Caco-2 (cell line): ENCODE measurements at regions of chr10 and their contacts with region 1.

Region 1: DNA sequence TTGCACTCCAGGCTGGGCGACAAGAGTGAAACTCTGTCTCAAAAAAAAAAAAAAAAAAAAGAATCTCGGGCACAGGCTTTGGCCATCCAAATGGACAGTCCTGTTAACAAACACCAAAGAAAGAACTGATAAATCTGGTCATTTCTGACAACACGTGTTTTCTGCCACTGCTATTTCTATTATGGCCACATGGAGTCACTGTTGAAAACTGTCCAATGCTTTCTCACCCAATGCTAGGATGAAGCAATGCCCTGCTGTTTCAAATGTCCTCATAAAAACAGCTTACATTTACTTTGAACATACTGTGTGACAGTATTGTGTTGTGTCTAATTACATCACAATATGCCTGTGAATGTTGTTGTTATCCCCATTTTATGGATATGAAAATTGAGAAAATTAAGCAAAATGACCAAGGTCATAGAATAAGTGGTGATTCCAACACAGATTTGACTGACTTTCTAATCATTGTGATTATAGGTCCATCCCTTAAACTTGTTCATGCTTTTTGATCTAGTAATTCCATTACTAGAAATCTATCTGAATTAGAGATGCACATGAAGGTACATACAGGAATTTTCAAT is 19.9 kb upstream of the MAP3K8 start:
- DNase-seq: peak in 1 of 2 experiments; percentile 77
- H3K4me3 ChIP-seq: no peak overlapping the region
- H3K4me3 Mint-ChIP-seq: no peak overlapping the region
- H3K27ac Mint-ChIP-seq: no peak overlapping the region
- H3K4me1 ChIP-seq: peaks cover 15% of the 10 kb centered on the region
- H3K4me1 Mint-ChIP-seq: peaks cover 14% of the 10 kb centered on the region
- H3K27me3 ChIP-seq: no peaks in the 10 kb centered on the region
- H3K27me3 Mint-ChIP-seq: no peaks in the 10 kb centered on the region
- CTCF ChIP-seq: peak; percentile 91 to 94

Region 2: DNA sequence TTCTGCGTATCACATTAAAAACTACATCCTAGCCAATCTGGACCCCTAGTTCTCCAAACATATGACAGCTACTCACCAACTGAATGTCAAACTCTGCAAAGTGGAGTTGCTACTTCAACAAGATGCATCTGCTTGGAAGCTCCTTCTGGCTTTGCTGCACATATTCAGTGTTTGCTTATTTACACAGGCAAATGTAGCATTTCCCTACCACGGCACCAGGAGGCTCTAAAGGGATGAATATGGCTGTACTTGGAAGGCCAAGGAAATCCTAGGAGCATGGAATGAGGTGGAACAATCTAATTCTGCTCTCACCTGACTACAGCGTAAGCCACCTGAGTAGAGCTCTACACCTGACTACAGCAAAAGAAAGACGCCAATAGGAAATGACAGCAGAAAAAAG is 104.7 kb before region 1 on chr10:
- CTCF ChIA-PET with region 1: no interaction called
- POLR2A ChIA-PET with region 1: no interaction called
- intact Hi-C with region 1: no loop called
- DNase-seq: no peak
- H3K4me3 ChIP-seq: no peak overlapping the region
- H3K4me3 Mint-ChIP-seq: no peak overlapping the region
- H3K27ac Mint-ChIP-seq: no peak overlapping the region
- H3K4me1 ChIP-seq: no peaks in the 10 kb centered on the region
- H3K4me1 Mint-ChIP-seq: no peaks in the 10 kb centered on the region
- H3K27me3 ChIP-seq: no peaks in the 10 kb centered on the region
- H3K27me3 Mint-ChIP-seq: no peaks in the 10 kb centered on the region
- CTCF ChIP-seq: no peak

Region 3: GRCh38 chr10:30433730-30434272 is 19.7 kb after region 1 on chr10 and contains the start of gene MAP3K8:
- CTCF ChIA-PET with region 1: interaction called, 38 read pairs
- POLR2A ChIA-PET with region 1: interaction called, 29 read pairs
- intact Hi-C with region 1: loop called (anchors 1 kb)
- DNase-seq: peak; percentile 95 to 96
- H3K4me3 ChIP-seq: peak within 1 kb of the TSS; percentile 91
- H3K4me3 Mint-ChIP-seq: peak within 1 kb of the TSS; percentile 92
- H3K27ac Mint-ChIP-seq: peak within 1 kb of the TSS; percentile 97
- H3K4me1 ChIP-seq: peaks cover 47% of the 10 kb centered on the region
- H3K4me1 Mint-ChIP-seq: peaks cover 56% of the 10 kb centered on the region
- H3K27me3 ChIP-seq: no peaks in the 10 kb centered on the region
- H3K27me3 Mint-ChIP-seq: no peaks in the 10 kb centered on the region
- CTCF ChIP-seq: peak in 1 of 2 experiments; percentile 1
- total RNA-seq, gene MAP3K8: 17.9 and 18.8 TPM in 2 replicates

Region 4: GRCh38 chr10:30454744-30455510 is 40.8 kb after region 1 on chr10:
- CTCF ChIA-PET with region 1: interaction called, 10 read pairs
- POLR2A ChIA-PET with region 1: no interaction called
- intact Hi-C with region 1: no loop called
- DNase-seq: no peak
- H3K4me3 ChIP-seq: no peak overlapping the region
- H3K4me3 Mint-ChIP-seq: no peak overlapping the region
- H3K27ac Mint-ChIP-seq: no peak overlapping the region
- H3K4me1 ChIP-seq: peaks cover 11% of the 10 kb centered on the region
- H3K4me1 Mint-ChIP-seq: no peaks in the 10 kb centered on the region
- H3K27me3 ChIP-seq: no peaks in the 10 kb centered on the region
- H3K27me3 Mint-ChIP-seq: no peaks in the 10 kb centered on the region
- CTCF ChIP-seq: no peak

Region 5: GRCh38 chr10:30519639-30520038 is 105.6 kb after region 1 on chr10:
- CTCF ChIA-PET with region 1: no interaction called
- POLR2A ChIA-PET with region 1: no interaction called
- intact Hi-C with region 1: loop called (anchors 1 kb)
- DNase-seq: no peak
- H3K4me3 ChIP-seq: no peak overlapping the region
- H3K4me3 Mint-ChIP-seq: no peak overlapping the region
- H3K27ac Mint-ChIP-seq: no peak overlapping the region
- H3K4me1 ChIP-seq: peaks cover 24% of the 10 kb centered on the region
- H3K4me1 Mint-ChIP-seq: peaks cover 18% of the 10 kb centered on the region
- H3K27me3 ChIP-seq: no peaks in the 10 kb centered on the region
- H3K27me3 Mint-ChIP-seq: no peaks in the 10 kb centered on the region
- CTCF ChIP-seq: no peak

Region 6: DNA sequence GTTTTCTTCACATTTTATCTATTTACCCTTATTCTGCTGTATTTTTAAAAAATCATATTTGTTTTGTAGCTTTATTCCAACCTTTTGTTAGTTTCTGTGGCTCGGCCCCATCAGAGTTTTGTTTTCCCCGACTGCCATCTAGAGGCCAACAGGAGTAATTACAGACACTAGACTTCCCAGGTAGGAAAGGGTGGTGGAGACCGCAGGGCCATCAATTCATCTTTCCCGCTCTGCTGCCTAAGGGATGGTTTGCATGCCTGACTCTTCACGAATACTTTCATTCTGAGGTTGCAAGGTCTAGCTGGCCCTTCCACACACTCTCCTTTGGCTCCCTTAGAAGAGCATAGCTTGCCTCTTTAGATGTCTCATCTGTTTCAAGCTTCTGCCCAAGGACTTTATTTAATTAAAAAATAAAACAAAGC is 177.2 kb after region 1 on chr10:
- CTCF ChIA-PET with region 1: interaction called, 10 read pairs
- POLR2A ChIA-PET with region 1: no interaction called
- intact Hi-C with region 1: loop called (anchors 1 kb)
- DNase-seq: peak in 1 of 2 experiments; percentile 61
- H3K4me3 ChIP-seq: no peak overlapping the region
- H3K4me3 Mint-ChIP-seq: no peak overlapping the region
- H3K27ac Mint-ChIP-seq: no peak overlapping the region
- H3K4me1 ChIP-seq: no peaks in the 10 kb centered on the region
- H3K4me1 Mint-ChIP-seq: peaks cover 6% of the 10 kb centered on the region
- H3K27me3 ChIP-seq: no peaks in the 10 kb centered on the region
- H3K27me3 Mint-ChIP-seq: peaks cover 6% of the 10 kb centered on the region
- CTCF ChIP-seq: peak; percentile 81 to 84